Natural killer cell (primary cell): ENCODE measurements at regions of chr2 and their contacts with region 1.

Region 1: GRCh38 chr2:134988994-134989605 is 58.1 kb downstream of the MAP3K19 start:
- DNase-seq: peak in 1 of 2 donors; percentile 54
- ATAC-seq: peak in 1 of 3 donors; percentile 61
- H3K4me3 ChIP-seq: no peak overlapping the region
- H3K4me3 Mint-ChIP-seq: no peak overlapping the region
- H3K27ac ChIP-seq: no peak overlapping the region
- H3K27ac Mint-ChIP-seq: no peak overlapping the region
- H3K4me1 ChIP-seq: no peaks in the 10 kb centered on the region
- H3K4me1 Mint-ChIP-seq: no peaks in the 10 kb centered on the region
- H3K27me3 ChIP-seq: no peaks in the 10 kb centered on the region
- H3K27me3 Mint-ChIP-seq: peaks cover 10 to 18% of the 10 kb centered on the region in 2 donors
- CTCF ChIP-seq: peak; percentile 66

Region 2: DNA sequence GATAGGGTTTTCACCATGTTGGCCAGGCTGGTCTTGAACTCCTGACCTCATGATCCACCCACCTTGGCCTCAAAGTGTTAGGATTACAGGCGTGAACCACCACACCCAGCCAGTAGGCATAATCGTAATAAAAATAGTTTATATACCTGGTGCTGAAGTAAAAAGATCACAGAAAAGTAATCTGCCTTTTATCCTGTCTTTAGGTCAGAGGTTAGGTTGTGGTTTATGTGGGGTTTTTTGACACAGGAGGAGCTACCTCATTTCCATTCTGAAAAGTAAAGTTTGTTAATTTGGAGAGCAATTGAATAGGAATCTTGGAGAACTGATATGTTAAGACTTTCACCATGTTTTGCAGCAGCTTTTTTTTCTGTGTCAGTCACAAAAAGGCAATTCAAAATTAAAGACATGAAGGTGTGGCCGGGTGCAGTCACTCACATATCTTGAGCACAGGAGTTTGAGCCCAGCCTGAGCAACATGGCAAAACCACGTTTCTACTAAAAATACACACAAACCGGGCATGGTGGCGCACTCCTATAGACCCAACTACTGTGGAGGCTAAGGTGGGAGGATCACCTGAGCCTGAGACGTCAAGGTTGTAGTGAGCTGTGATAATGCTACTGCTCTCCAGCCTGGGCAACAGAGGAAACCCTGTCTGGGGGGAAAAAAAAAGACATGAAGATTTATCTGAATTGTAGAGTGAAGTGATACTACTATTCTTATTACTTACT is 39.0 kb before region 1 on chr2:
- intact Hi-C with region 1: no loop called
- DNase-seq: peak in 1 of 2 donors; percentile 25
- ATAC-seq: peak in 2 of 3 donors; percentile 12 to 34
- H3K4me3 ChIP-seq: no peak overlapping the region
- H3K4me3 Mint-ChIP-seq: no peak overlapping the region
- H3K27ac ChIP-seq: no peak overlapping the region
- H3K27ac Mint-ChIP-seq: peak overlapping the region; percentile 67 to 78
- H3K4me1 ChIP-seq: peaks cover 5% of the 10 kb centered on the region
- H3K4me1 Mint-ChIP-seq: peaks cover 19 to 25% of the 10 kb centered on the region in 2 donors
- H3K27me3 ChIP-seq: no peaks in the 10 kb centered on the region
- H3K27me3 Mint-ChIP-seq: no peaks in the 10 kb centered on the region
- CTCF ChIP-seq: no peak

Region 3: GRCh38 chr2:135797497-135798274 is 808.6 kb after region 1 on chr2:
- intact Hi-C with region 1: loop called (anchors 1 kb)
- DNase-seq: peak; percentile 72 to 89
- ATAC-seq: peak; percentile 88 to 90 (median 90)
- H3K4me3 ChIP-seq: no peak overlapping the region
- H3K4me3 Mint-ChIP-seq: no peak overlapping the region
- H3K27ac ChIP-seq: no peak overlapping the region
- H3K27ac Mint-ChIP-seq: no peak overlapping the region
- H3K4me1 ChIP-seq: peaks cover 12% of the 10 kb centered on the region
- H3K4me1 Mint-ChIP-seq: peaks cover 5 to 14% of the 10 kb centered on the region in 2 donors
- H3K27me3 ChIP-seq: no peaks in the 10 kb centered on the region
- H3K27me3 Mint-ChIP-seq: peaks cover 0 to 6% of the 10 kb centered on the region in 2 donors
- CTCF ChIP-seq: peak; percentile 85